ENCODE measurements at regions of chr15 and their contacts with region 1.

Region 1: DNA sequence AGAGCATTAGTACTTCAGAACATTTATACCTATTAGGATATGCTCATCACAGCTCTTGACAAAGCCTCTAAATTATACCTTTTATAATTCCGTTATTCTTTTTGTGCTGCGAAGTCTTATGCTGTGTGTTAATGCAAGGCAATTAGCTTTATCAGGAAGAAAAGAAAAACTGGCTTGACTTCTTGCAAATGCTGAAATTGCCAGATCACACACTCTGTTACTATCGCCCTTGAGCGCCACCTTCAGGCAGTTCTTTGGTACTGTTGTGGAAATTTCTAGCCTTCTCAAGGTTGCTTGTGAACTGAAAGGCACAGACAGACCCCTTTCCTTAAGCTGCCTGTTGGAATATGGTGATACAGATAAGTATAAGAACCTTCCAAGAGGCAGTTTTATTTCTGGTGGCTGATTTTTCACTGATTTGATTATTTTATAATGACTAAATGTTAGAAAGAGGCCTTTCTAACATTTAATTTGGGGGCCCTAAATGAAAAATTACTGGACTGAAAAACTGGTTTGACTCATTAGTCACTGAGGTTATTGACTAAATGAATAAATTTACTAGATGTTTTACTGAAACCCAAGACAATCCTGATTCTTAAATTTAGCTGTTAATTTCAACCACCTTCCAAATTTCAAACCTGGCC is 126.2 kb upstream of the RASGRP1 start:
- DNase-seq: peak; percentile 88
- ATAC-seq: peak; percentile 38
- H3K4me3 Mint-ChIP-seq: no peak overlapping the region
- H3K27ac Mint-ChIP-seq: peak overlapping the region; percentile 62
- H3K4me1 Mint-ChIP-seq: peaks cover 71% of the 10 kb centered on the region
- H3K27me3 Mint-ChIP-seq: no peaks in the 10 kb centered on the region
- CTCF ChIP-seq: peak; percentile 91

Region 2: GRCh38 chr15:38479266-38479665 is 211.5 kb before region 1 on chr15:
- CTCF ChIA-PET with region 1: interaction called, 108 read pairs
- POLR2A ChIA-PET with region 1: interaction called, 5 read pairs
- intact Hi-C with region 1: no loop called
- DNase-seq: no peak
- ATAC-seq: no peak
- H3K4me3 Mint-ChIP-seq: no peak overlapping the region
- H3K27ac Mint-ChIP-seq: no peak overlapping the region
- H3K4me1 Mint-ChIP-seq: peaks cover 27% of the 10 kb centered on the region
- H3K27me3 Mint-ChIP-seq: no peaks in the 10 kb centered on the region
- CTCF ChIP-seq: no peak

Region 3: DNA sequence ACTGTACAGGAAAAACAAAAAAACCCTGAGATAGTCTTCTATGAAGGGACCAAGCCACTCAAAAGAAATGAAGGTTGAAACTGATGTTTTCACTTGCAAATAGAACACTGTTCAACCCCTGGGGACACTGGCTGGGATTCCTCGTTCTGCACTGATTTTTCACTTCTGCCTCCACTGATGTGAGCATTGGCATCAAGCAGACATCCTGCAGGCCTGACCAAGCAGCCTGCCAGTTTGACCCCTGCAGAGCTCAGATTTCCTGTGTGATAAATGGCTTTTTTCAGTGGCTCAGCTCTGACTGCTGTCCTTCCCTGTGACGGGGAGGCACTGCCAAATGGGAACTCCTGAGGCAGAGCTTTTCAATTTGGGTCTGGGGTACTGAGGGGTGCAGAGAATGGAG is 176.2 kb before region 1 on chr15:
- CTCF ChIA-PET with region 1: interaction called, 49 read pairs
- POLR2A ChIA-PET with region 1: interaction called, 5 read pairs
- intact Hi-C with region 1: no loop called
- DNase-seq: no peak
- ATAC-seq: no peak
- H3K4me3 Mint-ChIP-seq: no peak overlapping the region
- H3K27ac Mint-ChIP-seq: peak overlapping the region; percentile 71
- H3K4me1 Mint-ChIP-seq: peaks cover 45% of the 10 kb centered on the region
- H3K27me3 Mint-ChIP-seq: no peaks in the 10 kb centered on the region
- CTCF ChIP-seq: no peak

Region 4: GRCh38 chr15:38554354-38554753 is 136.5 kb before region 1 on chr15:
- CTCF ChIA-PET with region 1: interaction called, 464 read pairs
- POLR2A ChIA-PET with region 1: interaction called, 192 read pairs
- intact Hi-C with region 1: no loop called
- DNase-seq: peak; percentile 67
- ATAC-seq: peak; percentile 73
- H3K4me3 Mint-ChIP-seq: peak overlapping the region; percentile 54
- H3K27ac Mint-ChIP-seq: peak overlapping the region; percentile 96
- H3K4me1 Mint-ChIP-seq: peaks cover 88% of the 10 kb centered on the region
- H3K27me3 Mint-ChIP-seq: no peaks in the 10 kb centered on the region
- CTCF ChIP-seq: no peak

Region 5: GRCh38 chr15:38631126-38632075 is 59.4 kb before region 1 on chr15:
- CTCF ChIA-PET with region 1: interaction called, 12 read pairs
- POLR2A ChIA-PET with region 1: interaction called, 4 read pairs
- intact Hi-C with region 1: no loop called
- DNase-seq: peak; percentile 54
- ATAC-seq: peak; percentile 68
- H3K4me3 Mint-ChIP-seq: peak overlapping the region; percentile 33
- H3K27ac Mint-ChIP-seq: peak overlapping the region; percentile 93
- H3K4me1 Mint-ChIP-seq: peaks cover 56% of the 10 kb centered on the region
- H3K27me3 Mint-ChIP-seq: no peaks in the 10 kb centered on the region
- CTCF ChIP-seq: no peak

Measured in activated CD8-positive, alpha-beta T cell treated with anti-CD3 and anti-CD28 coated beads for 36 hours (primary cell).